HEK293T (cell line): ENCODE measurements at regions of chr1 and their contacts with region 1.

Region 1: GRCh38 chr1:236795035-236795756 is at the start of gene MTR:
- DNase-seq: peak; percentile 100

Region 2: GRCh38 chr1:236759252-236759859 is 35.8 kb before region 1 on chr1:
- CTCF ChIA-PET with region 1: interaction called, 5 read pairs
- POLR2A ChIA-PET with region 1: interaction called, 21 read pairs
- DNase-seq: peak; percentile 68

Region 3: GRCh38 chr1:236774926-236775325 is 20.3 kb before region 1 on chr1:
- CTCF ChIA-PET with region 1: no interaction called
- POLR2A ChIA-PET with region 1: interaction called, 10 read pairs
- DNase-seq: peak; percentile 60

Region 4: DNA sequence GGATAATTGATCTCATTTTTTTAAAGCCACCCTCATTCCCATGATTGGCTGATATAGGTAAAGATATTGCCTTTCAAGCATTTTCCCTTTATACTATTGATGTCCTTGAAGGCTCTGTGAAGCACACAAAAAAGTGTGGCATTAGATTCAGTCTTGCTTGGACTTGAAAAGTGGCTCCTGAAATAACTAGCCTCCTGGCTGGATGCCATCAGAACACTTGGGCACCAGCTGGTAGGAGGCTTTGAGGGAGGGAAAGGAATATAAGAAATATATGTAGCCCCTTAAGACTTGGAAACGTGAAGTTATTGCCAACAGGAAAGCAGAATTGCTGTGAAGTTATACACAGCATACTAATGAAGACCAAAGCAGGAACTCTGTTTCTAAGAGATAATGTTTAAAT is 14.0 kb after region 1 on chr1:
- CTCF ChIA-PET with region 1: no interaction called
- POLR2A ChIA-PET with region 1: interaction called, 12 read pairs
- DNase-seq: no peak

Region 5: GRCh38 chr1:236844499-236845271 is 49.5 kb after region 1 on chr1:
- CTCF ChIA-PET with region 1: no interaction called
- POLR2A ChIA-PET with region 1: no interaction called
- DNase-seq: no peak